Common myeloid progenitor, CD34-positive (primary cell): ENCODE measurements at regions of chr6 and their contacts with region 1.

Region 1: GRCh38 chr6:20467437-20467836 is 65.8 kb downstream of the E2F3 start:
- DNase-seq: peak in 2 of 3 donors; percentile 31 to 49
- H3K4me3 ChIP-seq: peak overlapping the region in 2 of 7 experiments; percentile 20 to 36
- H3K27ac ChIP-seq: peak overlapping the region in 1 of 2 experiments; percentile 38
- H3K4me1 ChIP-seq: peaks cover 0 to 29% (median 13%) of the 10 kb centered on the region in 4 experiments
- H3K27me3 ChIP-seq: no peaks in the 10 kb centered on the region

Region 2: DNA sequence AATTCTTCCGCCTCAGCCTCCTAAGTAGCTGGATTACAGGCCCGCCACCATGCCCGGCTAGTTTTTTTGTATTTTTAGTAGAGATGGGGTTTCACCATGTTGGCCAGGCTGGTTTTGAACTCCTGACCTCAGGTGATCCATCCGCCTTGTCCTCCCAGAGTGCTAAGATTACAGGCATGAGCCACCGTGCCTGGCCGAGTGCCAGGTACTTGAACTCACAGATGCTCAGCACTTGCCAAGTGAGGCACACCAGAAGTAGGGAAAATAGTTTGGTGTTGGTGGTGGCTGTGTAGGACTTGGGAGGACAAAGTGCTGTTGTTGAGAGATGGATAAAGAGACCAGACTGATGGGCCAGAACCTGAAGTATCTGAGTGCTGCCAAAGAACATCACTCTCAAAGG is 215.1 kb before region 1 on chr6:
- CTCF ChIA-PET with region 1: no interaction called
- POLR2A ChIA-PET with region 1: no interaction called
- DNase-seq: no peak
- H3K4me3 ChIP-seq: no peak overlapping the region
- H3K27ac ChIP-seq: no peak overlapping the region
- H3K4me1 ChIP-seq: no peaks in the 10 kb centered on the region
- H3K27me3 ChIP-seq: no peaks in the 10 kb centered on the region

Region 3: DNA sequence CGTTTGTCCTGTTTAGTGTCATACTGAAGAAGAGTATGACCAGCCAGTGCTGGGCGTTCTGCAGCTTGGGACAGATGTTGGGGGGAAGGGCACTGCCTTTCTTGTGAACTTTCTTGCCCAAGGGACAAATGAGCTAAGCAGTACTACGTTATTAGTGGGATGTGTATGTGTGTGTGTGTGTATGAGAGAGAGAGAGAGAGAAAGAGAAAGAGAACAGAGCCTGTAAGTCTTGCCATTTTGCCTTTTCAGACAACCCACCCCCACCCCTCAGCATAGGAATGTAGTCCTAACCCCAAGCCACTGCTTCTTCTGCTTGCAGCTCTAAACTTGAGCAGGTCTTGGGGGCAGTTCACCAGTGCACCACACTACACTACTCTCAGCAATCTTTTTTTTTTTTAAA is 20.3 kb before region 1 on chr6:
- CTCF ChIA-PET with region 1: interaction called, 10 read pairs
- POLR2A ChIA-PET with region 1: no interaction called
- DNase-seq: peak in 1 of 3 donors; percentile 31
- H3K4me3 ChIP-seq: no peak overlapping the region
- H3K27ac ChIP-seq: peak overlapping the region in 1 of 2 experiments; percentile 52
- H3K4me1 ChIP-seq: peaks cover 4 to 37% (median 22%) of the 10 kb centered on the region in 4 experiments
- H3K27me3 ChIP-seq: no peaks in the 10 kb centered on the region